Prostate gland (tissue), 2 donors: ENCODE measurements at regions of chr17 and their contacts with region 1.

Region 1: GRCh38 chr17:10697092-10698081 is at the starts of genes ADPRM and SCO1:
- DNase-seq: peak; percentile 93
- H3K4me3 ChIP-seq: peak within 1 kb of the TSS; percentile 74 to 84
- H3K27ac ChIP-seq: peak within 1 kb of the TSS; percentile 94 to 98
- H3K4me1 ChIP-seq: peaks cover 3% of the 10 kb centered on the region
- H3K27me3 ChIP-seq: no peaks in the 10 kb centered on the region
- CTCF ChIP-seq: peak; percentile 10 to 67 (median 58)
- POLR2A ChIP-seq: peak; percentile 94
- total RNA-seq, gene ADPRM: 9.7 to 23.1 TPM
- total RNA-seq, gene SCO1: 21.7 to 38.3 TPM

Region 2: GRCh38 chr17:10729334-10730193 is 32.2 kb after region 1 on chr17 and contains the start of gene TMEM220:
- intact Hi-C with region 1: loop called (anchors 2 kb)
- DNase-seq: peak; percentile 66
- H3K4me3 ChIP-seq: peak within 1 kb of the TSS; percentile 52 to 63
- H3K27ac ChIP-seq: peak within 1 kb of the TSS; percentile 96 to 97
- H3K4me1 ChIP-seq: peaks cover 3% of the 10 kb centered on the region
- H3K27me3 ChIP-seq: no peaks in the 10 kb centered on the region
- CTCF ChIP-seq: no peak
- POLR2A ChIP-seq: peak; percentile 63
- total RNA-seq, gene TMEM220: 18.4 to 30.1 TPM

Region 3: GRCh38 chr17:10741416-10742135 is 44.2 kb after region 1 on chr17:
- intact Hi-C with region 1: no loop called
- DNase-seq: no peak
- H3K4me3 ChIP-seq: no peak overlapping the region
- H3K27ac ChIP-seq: no peak overlapping the region
- H3K4me1 ChIP-seq: no peaks in the 10 kb centered on the region
- H3K27me3 ChIP-seq: no peaks in the 10 kb centered on the region
- CTCF ChIP-seq: no peak
- POLR2A ChIP-seq: no peak